A673 (cell line): ENCODE measurements at regions of chr20 and their contacts with region 1.

Region 1: DNA sequence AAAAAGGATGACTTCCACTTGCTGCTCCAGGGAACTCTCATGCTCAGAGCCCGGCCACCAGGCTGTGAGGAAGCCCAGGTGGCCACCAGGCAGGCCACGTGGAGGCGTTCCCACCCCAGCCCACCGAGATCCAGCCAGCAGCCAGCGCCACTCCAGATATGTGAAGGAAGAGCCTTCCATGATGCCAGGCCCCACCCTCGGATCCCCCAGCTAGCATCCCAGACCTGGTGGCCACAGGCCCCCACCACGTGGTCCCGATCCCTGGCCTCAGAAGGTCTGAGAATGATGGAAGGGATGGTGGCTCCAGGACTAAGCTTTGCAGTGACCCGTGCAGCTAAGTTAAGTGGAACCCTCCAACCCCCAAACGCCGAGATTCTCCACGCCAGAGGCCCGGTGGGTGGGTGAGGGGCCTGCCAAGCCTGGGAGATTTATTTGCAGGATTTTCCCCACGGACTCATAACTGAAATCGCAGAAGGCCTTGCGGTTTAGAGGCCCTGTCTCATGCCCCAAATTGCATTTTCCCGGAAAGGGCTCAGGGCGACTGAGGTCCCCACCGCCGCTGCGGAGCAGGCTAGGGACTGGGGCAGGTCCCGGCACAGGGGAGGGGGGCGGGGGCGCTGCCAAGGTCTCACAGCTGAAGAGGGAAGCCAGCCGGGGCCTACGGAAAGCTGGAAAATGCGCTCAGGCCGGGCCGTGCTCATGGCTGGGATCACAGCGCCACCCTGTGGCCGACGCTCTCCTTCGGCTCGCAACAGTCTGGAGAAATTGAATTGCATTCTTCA is 31.1 kb upstream of the CST7 start:
- DNase-seq: peak; percentile 89
- H3K4me3 ChIP-seq: peak overlapping the region; percentile 12
- H3K27ac ChIP-seq: peak overlapping the region; percentile 41
- H3K4me1 ChIP-seq: peaks cover 13% of the 10 kb centered on the region
- H3K27me3 ChIP-seq: no peaks in the 10 kb centered on the region
- CTCF ChIP-seq: peak; percentile 95

Region 2: DNA sequence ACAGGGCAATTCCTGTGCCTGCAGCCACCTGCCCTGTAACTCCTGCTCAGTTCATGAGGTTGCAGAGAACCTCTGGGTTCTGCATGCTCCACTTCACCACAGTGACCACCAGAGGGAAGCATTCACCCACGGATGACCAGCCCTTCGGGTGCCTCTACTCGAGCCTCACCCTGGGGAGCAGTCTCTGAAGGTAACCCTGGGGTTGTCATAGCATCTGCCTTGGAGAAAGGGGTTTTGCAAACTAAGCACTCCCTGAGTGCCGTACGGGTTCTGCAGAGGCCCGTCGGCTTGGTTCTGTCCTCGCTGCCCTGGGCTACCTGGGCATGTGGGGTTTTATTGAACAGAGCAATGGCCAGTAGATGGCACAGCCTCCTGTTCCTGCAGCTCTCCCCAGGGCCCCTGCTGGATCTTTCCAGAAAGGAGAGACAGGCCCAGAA is 1028.2 kb before region 1 on chr20:
- CTCF ChIA-PET with region 1: no interaction called
- POLR2A ChIA-PET with region 1: no interaction called
- intact Hi-C with region 1: loop called (anchors 2 kb)
- DNase-seq: peak; percentile 73
- H3K4me3 ChIP-seq: no peak overlapping the region
- H3K27ac ChIP-seq: no peak overlapping the region
- H3K4me1 ChIP-seq: no peaks in the 10 kb centered on the region
- H3K27me3 ChIP-seq: peaks cover 3% of the 10 kb centered on the region
- CTCF ChIP-seq: peak; percentile 82

Region 3: GRCh38 chr20:24034820-24035219 is 883.2 kb before region 1 on chr20:
- CTCF ChIA-PET with region 1: no interaction called
- POLR2A ChIA-PET with region 1: no interaction called
- intact Hi-C with region 1: loop called (anchors 10 kb)
- DNase-seq: no peak
- H3K4me3 ChIP-seq: no peak overlapping the region
- H3K27ac ChIP-seq: no peak overlapping the region
- H3K4me1 ChIP-seq: no peaks in the 10 kb centered on the region
- H3K27me3 ChIP-seq: no peaks in the 10 kb centered on the region
- CTCF ChIP-seq: no peak

Region 4: GRCh38 chr20:24160563-24161375 is 757.2 kb before region 1 on chr20:
- CTCF ChIA-PET with region 1: interaction called, 5 read pairs
- POLR2A ChIA-PET with region 1: no interaction called
- intact Hi-C with region 1: loop called (anchors 5 kb)
- DNase-seq: peak; percentile 68
- H3K4me3 ChIP-seq: no peak overlapping the region
- H3K27ac ChIP-seq: no peak overlapping the region
- H3K4me1 ChIP-seq: no peaks in the 10 kb centered on the region
- H3K27me3 ChIP-seq: no peaks in the 10 kb centered on the region
- CTCF ChIP-seq: peak; percentile 88

Region 5: DNA sequence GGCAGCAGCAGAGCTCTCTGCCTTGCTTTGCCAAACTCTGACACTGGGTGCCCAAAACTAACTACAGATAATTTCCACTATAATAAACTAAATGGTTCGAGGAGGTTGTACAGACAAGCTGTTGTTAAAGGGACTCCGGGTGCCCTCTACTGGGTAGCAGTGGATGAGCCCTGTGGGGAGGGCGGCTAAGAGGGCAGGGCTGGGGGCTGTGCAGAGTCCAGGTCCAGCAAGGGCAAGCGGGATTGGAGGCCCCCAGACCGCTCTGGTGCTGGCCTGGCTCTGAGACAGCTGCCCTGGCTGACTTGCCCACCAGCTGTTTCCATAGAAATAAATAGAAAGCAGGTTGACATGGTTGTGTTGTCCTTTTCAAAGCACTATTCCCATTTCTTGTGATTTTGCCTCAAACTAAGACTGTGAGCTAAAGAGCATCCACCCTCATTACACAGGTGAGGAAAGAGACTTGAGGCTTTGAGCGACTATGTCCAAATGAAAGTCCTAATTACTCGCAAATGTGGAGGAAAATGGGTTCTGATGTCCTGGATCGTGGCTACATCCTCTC is 136.5 kb before region 1 on chr20:
- CTCF ChIA-PET with region 1: interaction called, 4 read pairs
- POLR2A ChIA-PET with region 1: no interaction called
- intact Hi-C with region 1: loop called (anchors 5 kb)
- DNase-seq: peak; percentile 79
- H3K4me3 ChIP-seq: no peak overlapping the region
- H3K27ac ChIP-seq: peak overlapping the region; percentile 59
- H3K4me1 ChIP-seq: peaks cover 34% of the 10 kb centered on the region
- H3K27me3 ChIP-seq: no peaks in the 10 kb centered on the region
- CTCF ChIP-seq: peak; percentile 83